ENCODE measurements at regions of chr20 and their contacts with region 1.

Region 1: DNA sequence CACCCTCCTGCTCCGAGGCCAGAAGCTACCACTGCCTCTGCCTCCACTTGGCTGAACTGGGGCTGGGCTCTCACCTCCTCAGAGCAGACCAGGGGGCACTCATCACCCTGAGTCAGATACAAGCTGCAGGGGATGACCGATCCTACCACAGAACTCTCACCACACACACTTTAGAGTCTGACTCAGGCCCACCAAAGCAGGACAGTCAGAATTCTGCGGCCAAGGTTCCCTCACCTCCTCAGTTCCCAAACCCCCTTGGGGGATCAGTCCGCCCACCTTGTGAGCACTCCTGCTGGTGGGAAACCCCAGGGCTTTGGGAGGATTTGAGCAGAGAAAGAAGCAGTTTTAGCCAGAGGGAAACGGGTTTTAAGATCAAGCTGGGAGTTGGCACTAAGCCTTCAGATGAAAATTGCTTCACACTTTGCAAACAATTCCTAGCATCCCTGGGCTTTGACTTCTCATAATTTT is 587.8 kb upstream of the JAG1 start:
- DNase-seq: peak; percentile 38
- ATAC-seq: peak; percentile 96
- H3K4me3 ChIP-seq: no peak overlapping the region
- H3K27ac ChIP-seq: no peak overlapping the region
- H3K4me1 ChIP-seq: peaks cover under 1% of the 10 kb centered on the region; the same call in 1 of the 2 replicates
- H3K27me3 ChIP-seq: no peaks in the 10 kb centered on the region
- CTCF ChIP-seq: no peak
- EP300 ChIP-seq: 0 out of 4 replicates have a peak, but pooled peaks of 1 of the 2 experiments have one; percentile 11
- POLR2A ChIP-seq: no peak
- RAD21 ChIP-seq: no peak

Region 2: GRCh38 chr20:11216451-11217314 is 44.9 kb before region 1 on chr20:
- CTCF ChIA-PET with region 1: interaction called, 16 read pairs
- POLR2A ChIA-PET with region 1: interaction called, 4 read pairs
- RAD21 ChIA-PET with region 1: interaction called, 39 read pairs
- SMC1A ChIA-PET with region 1: interaction called, 57 read pairs
- in situ Hi-C with region 1: no loop called
- intact Hi-C with region 1: no loop called
- DNase-seq: no peak
- ATAC-seq: no peak; the same call in 2 of the 3 replicates
- H3K4me3 ChIP-seq: no peak overlapping the region
- H3K27ac ChIP-seq: no peak overlapping the region
- H3K4me1 ChIP-seq: peaks cover 13% of the 10 kb centered on the region
- H3K27me3 ChIP-seq: no peaks in the 10 kb centered on the region
- CTCF ChIP-seq: no peak
- EP300 ChIP-seq: no peak
- POLR2A ChIP-seq: no peak
- RAD21 ChIP-seq: no peak

Region 3: DNA sequence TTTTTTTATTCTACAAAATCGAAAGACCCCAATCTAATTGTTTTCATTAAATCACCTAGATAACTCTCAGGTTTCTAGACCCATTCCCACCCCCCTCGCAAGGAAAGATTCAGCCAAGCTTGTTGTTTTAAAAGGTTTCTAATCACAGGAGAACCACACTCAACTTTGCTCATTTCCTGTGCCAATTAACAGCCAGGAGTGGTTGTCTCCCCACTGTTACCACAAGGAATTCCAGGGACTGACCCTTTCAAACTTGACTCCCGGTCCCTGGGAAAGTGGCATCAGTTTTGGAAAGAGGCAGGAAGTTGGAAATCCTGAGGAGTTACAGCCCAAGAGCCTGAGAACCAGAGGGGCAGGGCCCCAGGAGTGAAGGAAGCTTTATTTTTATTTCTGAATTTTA is 26.5 kb before region 1 on chr20:
- CTCF ChIA-PET with region 1: interaction called, 4 read pairs
- POLR2A ChIA-PET with region 1: interaction called, 3 read pairs
- RAD21 ChIA-PET with region 1: interaction called, 13 read pairs
- SMC1A ChIA-PET with region 1: interaction called, 16 read pairs
- in situ Hi-C with region 1: no loop called
- intact Hi-C with region 1: no loop called
- DNase-seq: no peak
- ATAC-seq: peak; percentile 30
- H3K4me3 ChIP-seq: no peak overlapping the region
- H3K27ac ChIP-seq: peak overlapping the region; percentile 32; the same call in 1 of the 2 replicates
- H3K4me1 ChIP-seq: peaks cover 15% of the 10 kb centered on the region
- H3K27me3 ChIP-seq: no peaks in the 10 kb centered on the region
- CTCF ChIP-seq: no peak
- EP300 ChIP-seq: no peak
- POLR2A ChIP-seq: no peak
- RAD21 ChIP-seq: no peak

Region 4: DNA sequence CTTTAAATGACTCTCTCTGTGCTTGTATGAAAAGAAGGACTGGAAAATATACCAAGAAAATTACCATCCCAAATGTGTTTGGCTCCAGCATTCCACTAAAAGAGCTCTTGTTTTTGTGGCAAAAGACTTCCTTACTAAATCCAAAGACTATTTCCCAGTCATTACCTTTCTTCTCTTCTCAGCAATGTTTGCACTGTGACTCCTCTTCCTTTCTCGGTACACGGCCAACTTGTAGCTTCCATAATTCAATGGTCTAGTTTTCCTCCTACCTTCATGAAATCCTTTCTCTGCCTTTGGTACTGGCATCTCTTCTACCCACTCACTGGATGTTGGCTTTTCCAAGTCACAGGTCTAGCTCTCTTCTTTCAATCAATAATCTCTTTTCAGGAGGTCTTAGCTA is 19.2 kb before region 1 on chr20:
- CTCF ChIA-PET with region 1: interaction called, 42 read pairs
- POLR2A ChIA-PET with region 1: interaction called, 3 read pairs
- RAD21 ChIA-PET with region 1: interaction called, 22 read pairs
- SMC1A ChIA-PET with region 1: interaction called, 35 read pairs
- in situ Hi-C with region 1: no loop called
- intact Hi-C with region 1: no loop called
- DNase-seq: no peak
- ATAC-seq: no peak
- H3K4me3 ChIP-seq: no peak overlapping the region
- H3K27ac ChIP-seq: no peak overlapping the region
- H3K4me1 ChIP-seq: no peaks in the 10 kb centered on the region
- H3K27me3 ChIP-seq: no peaks in the 10 kb centered on the region; a peak in 2 of 4 replicates
- CTCF ChIP-seq: no peak
- EP300 ChIP-seq: no peak
- POLR2A ChIP-seq: no peak
- RAD21 ChIP-seq: no peak

Region 5: GRCh38 chr20:11248687-11249194 is 12.8 kb before region 1 on chr20:
- CTCF ChIA-PET with region 1: interaction called, 42 read pairs
- POLR2A ChIA-PET with region 1: interaction called, 9 read pairs
- RAD21 ChIA-PET with region 1: interaction called, 22 read pairs
- SMC1A ChIA-PET with region 1: interaction called, 35 read pairs
- in situ Hi-C with region 1: no loop called
- intact Hi-C with region 1: no loop called
- DNase-seq: no peak
- ATAC-seq: peak; percentile 52
- H3K4me3 ChIP-seq: no peak overlapping the region
- H3K27ac ChIP-seq: no peak overlapping the region
- H3K4me1 ChIP-seq: no peaks in the 10 kb centered on the region
- H3K27me3 ChIP-seq: no peaks in the 10 kb centered on the region; a peak in 2 of 4 replicates
- CTCF ChIP-seq: no peak
- EP300 ChIP-seq: no peak
- POLR2A ChIP-seq: no peak
- RAD21 ChIP-seq: no peak

Measured in GM12878 (cell line).